Endothelial cell of umbilical vein (primary cell): ENCODE measurements at regions of chr1 and their contacts with region 1.

Region 1: DNA sequence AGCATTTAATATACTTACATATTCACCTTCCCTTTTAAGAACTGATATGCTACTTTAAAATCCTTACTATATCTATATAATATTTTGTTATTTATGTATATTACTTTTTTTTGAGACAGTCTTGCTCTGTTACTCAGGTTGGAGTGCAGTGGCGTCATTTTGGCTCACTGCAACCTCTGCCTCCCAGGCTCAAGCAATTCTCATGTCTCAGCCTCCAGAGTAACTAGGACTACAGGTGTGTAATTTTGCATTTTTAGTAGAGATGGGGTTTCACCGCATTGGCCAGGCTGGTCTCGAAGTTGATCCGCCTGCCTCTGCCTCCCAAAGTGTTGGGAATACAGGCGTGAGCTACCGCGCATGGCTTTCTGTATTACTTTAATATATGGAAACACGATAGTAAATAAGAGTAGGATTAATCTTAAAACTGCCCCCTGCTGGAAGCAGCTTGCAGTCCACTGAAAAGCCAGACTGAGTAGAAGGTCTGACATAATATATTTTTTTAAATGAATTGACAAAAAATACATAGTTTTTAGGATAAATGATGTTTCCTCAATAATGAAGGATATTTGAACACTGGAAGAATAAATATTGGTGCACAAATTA is 24.4 kb downstream of the RCAN3 start:
- DNase-seq: peak; percentile 23
- H3K4me3 ChIP-seq: no peak overlapping the region
- H3K27ac ChIP-seq: no peak overlapping the region
- H3K4me1 ChIP-seq: no peaks in the 10 kb centered on the region
- H3K27me3 ChIP-seq: no peaks in the 10 kb centered on the region
- CTCF ChIP-seq: peak; percentile 48 to 53
- POLR2A ChIP-seq: no peak

Region 2: GRCh38 chr1:24514946-24515345 is 12.1 kb before region 1 on chr1:
- CTCF ChIA-PET with region 1: interaction called, 40 read pairs
- POLR2A ChIA-PET with region 1: no interaction called
- dilution Hi-C with region 1: no loop called
- intact Hi-C with region 1: no loop called
- DNase-seq: no peak
- H3K4me3 ChIP-seq: no peak overlapping the region
- H3K27ac ChIP-seq: no peak overlapping the region
- H3K4me1 ChIP-seq: no peaks in the 10 kb centered on the region
- H3K27me3 ChIP-seq: no peaks in the 10 kb centered on the region
- CTCF ChIP-seq: no peak
- POLR2A ChIP-seq: no peak